PC-9 (cell line): ENCODE measurements at regions of chr17 and their contacts with region 1.

Region 1: DNA sequence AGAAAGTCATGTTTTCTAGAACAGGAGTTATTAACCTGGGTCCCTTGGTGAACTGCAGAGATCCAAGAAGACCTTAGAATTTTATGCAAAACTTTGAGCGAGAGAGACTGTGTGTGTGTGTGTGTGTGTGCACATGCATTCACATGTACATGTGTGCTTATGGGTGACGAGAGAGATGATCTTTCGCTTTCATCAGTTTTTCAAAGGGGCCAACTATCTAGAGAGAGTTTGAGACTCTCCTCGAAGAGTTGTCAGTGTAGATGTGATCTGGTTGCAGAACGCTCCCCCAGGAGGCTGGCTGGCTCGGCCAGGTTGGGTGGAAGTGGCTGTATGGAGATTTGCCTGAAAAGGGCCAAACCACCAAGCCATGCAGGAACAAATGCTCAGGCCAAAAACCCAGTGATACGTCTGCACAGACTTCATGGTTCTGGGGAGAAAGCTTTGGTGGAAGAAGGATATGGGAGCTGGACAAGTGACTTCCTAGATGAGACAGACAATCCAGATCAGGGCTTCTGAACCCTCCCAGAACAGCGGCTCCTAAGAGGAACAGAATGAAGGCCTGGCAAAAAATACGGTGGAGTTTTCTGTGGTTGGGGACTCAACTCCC is 6.1 kb downstream of the PIK3R5 start:
- DNase-seq: no peak
- H3K4me3 ChIP-seq: no peak overlapping the region
- H3K27ac ChIP-seq: no peak overlapping the region
- H3K4me1 ChIP-seq: no peaks in the 10 kb centered on the region
- H3K27me3 ChIP-seq: peaks cover 49% of the 10 kb centered on the region
- CTCF ChIP-seq: no peak

Region 2: GRCh38 chr17:8976638-8977037 is 17.2 kb after region 1 on chr17:
- CTCF ChIA-PET with region 1: no interaction called
- POLR2A ChIA-PET with region 1: no interaction called
- intact Hi-C with region 1: loop called (anchors 1 kb)
- DNase-seq: no peak
- H3K4me3 ChIP-seq: no peak overlapping the region
- H3K27ac ChIP-seq: no peak overlapping the region
- H3K4me1 ChIP-seq: no peaks in the 10 kb centered on the region
- H3K27me3 ChIP-seq: no peaks in the 10 kb centered on the region
- CTCF ChIP-seq: no peak

Region 3: DNA sequence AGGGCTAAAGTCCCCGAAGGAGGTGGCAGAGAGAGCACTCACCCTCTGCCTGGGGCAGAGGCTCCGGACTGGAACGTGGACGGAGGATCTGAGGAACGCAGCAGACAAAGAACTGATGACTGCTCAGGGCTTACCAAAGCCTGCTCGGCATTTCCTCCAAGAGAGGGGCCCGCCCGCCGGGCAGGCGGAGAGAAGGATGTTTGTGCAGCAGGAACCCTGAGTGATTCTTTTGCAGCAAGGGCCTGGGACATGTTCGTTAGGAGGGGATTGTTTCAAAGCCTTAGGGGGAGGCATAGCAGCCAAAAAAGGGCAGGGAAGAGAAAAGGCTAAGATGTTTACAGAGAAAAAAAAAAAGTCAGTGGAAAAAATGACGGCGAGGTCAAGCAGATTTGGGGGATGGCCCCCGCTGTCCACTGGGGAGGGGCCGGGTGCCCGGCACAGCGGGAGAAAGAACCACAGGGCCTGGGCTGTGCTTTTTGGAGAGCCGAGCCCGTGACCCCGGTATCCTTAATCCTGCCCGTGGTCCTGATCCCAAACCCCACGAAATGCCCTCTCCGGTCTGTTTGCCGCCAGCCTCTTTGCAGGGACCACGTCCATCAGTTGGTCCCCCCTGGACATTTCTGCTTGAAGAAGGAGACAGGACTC is 191.2 kb after region 1 on chr17:
- CTCF ChIA-PET with region 1: no interaction called
- POLR2A ChIA-PET with region 1: no interaction called
- intact Hi-C with region 1: no loop called
- DNase-seq: no peak
- H3K4me3 ChIP-seq: no peak overlapping the region
- H3K27ac ChIP-seq: no peak overlapping the region
- H3K4me1 ChIP-seq: no peaks in the 10 kb centered on the region
- H3K27me3 ChIP-seq: no peaks in the 10 kb centered on the region
- CTCF ChIP-seq: no peak